GM23248 (cell line): ENCODE measurements at regions of chr4 and their contacts with region 1.

Region 1: DNA sequence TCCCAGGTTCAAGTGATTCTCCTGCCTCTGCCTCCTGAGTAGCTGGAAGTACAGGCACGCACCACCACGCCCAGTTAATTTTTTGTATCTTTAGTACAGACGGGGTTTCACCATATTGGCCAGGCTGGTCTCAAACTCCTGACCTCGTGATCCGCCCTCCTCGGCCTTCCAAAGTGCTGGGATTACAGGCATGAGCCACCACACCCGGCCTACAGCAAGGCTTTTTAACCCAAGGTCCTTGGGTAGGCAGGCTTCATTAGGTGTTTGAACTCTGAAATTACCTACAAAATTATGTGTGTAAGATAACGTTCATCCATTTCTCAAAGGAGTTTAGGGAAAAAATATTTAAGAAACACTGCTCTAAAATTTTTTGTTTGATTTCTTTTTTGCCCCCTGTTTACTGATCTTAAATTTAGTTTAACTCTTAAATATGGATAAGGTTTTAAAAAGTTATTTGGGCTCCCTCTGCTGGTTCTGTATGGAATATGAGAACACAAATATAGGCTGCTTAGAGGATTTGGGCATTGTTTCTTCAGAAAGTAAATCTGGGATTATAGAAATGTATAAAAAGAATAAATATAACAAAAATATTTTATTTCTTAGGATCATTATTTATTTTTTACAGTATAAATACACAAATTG is 92.8 kb downstream of the CBR4 start:
- DNase-seq: peak; percentile 71
- H3K4me3 ChIP-seq: no peak overlapping the region
- H3K27ac ChIP-seq: no peak overlapping the region
- H3K4me1 ChIP-seq: 0 out of 2 replicates have a peak, but pooled peaks cover 3% of the 10 kb centered on the region
- H3K27me3 ChIP-seq: no peaks in the 10 kb centered on the region

Region 2: DNA sequence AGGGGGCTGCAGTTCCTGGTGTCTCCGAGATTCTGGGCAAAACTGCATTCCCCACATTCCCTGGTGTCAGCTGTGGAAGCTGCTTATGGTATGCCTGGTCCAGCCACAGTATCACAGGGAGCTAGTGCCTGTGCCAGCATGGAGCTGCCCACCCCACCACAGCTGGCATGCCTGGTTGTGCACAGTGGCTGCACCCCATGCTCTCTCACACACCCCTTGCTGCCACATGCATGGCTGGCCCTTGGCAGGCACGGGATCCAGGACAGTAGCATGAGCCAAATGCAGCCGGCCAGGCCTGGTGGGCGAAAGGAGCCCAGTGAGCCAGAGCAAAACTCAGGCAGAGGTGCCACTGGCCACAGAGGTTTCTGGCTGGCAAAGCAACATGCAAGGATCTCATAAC is 1265.0 kb before region 1 on chr4:
- in situ Hi-C with region 1: no loop called
- DNase-seq: no peak
- H3K4me3 ChIP-seq: no peak overlapping the region
- H3K27ac ChIP-seq: no peak overlapping the region
- H3K4me1 ChIP-seq: no peaks in the 10 kb centered on the region
- H3K27me3 ChIP-seq: no peaks in the 10 kb centered on the region

Region 3: DNA sequence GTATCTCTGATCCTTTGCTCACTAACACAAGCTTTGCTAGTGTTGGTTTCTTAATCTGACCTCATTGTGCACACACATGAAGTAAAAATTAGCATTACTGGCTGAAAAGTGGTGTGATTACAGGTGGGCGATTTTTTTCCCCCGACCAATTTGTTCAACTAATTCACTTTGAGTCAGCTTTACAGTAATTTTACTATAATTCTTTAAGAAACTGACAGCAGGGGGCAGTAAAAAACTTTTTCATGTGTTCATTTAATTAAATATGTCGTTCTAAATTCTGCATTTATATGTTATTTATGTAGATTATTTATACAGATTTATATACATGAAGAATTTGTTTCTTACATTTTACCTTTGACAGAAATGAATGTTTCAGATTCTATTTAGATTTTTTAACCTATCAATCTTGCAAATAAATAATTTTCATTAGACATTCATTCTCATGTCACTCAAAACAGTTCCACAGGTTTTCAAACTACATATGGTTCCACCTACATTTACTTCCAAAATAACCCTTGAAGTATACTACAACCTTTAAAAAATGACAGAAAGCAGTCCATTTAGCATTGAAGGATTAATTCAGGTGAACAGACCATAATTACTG is 402.9 kb before region 1 on chr4:
- in situ Hi-C with region 1: loop called (anchors 10 kb)
- DNase-seq: peak; percentile 64
- H3K4me3 ChIP-seq: no peak overlapping the region
- H3K27ac ChIP-seq: no peak overlapping the region
- H3K4me1 ChIP-seq: peaks cover 7% of the 10 kb centered on the region
- H3K27me3 ChIP-seq: no peaks in the 10 kb centered on the region

Region 4: GRCh38 chr4:168585168-168586091 is 331.8 kb before region 1 on chr4:
- in situ Hi-C with region 1: loop called (anchors 10 kb)
- DNase-seq: peak; percentile 94
- H3K4me3 ChIP-seq: no peak overlapping the region
- H3K27ac ChIP-seq: peak overlapping the region; percentile 33
- H3K4me1 ChIP-seq: peaks cover 48% of the 10 kb centered on the region
- H3K27me3 ChIP-seq: no peaks in the 10 kb centered on the region

Region 5: DNA sequence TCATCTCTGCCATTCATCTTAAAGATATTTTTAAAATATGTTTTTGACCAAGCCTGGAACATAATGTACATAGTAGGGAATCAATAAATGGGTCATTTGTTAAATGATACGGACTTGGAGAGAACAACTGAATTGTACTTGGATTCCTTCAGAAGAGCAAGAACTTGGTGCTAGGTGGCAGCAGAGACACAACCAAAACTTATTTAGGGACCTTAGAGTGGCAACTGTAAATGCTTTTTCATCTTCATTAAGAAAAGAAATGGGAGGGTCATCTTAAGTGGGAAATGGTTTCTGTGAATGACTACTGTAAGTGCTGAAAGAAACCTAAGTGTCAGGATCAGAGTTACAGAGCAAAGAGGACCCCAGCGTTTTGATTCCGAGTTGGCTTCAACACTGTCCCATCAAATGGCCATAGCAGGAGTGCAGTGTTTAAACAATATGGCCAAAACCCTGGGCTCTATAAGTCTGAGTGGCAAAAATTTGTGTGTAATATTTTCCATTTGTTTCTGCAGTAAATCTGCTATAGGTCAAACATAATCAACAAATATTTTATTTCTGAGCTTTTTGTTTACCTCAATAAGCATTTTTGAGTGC is 206.8 kb before region 1 on chr4:
- in situ Hi-C with region 1: loop called (anchors 10 kb)
- DNase-seq: peak; percentile 69
- H3K4me3 ChIP-seq: no peak overlapping the region
- H3K27ac ChIP-seq: no peak overlapping the region
- H3K4me1 ChIP-seq: peaks cover 28% of the 10 kb centered on the region
- H3K27me3 ChIP-seq: no peaks in the 10 kb centered on the region